Activated B cell treated with CpG ODN at 0.5 μM for 24 hours (primary cell): ENCODE measurements at regions of chr10 and their contacts with region 1.

Region 1: DNA sequence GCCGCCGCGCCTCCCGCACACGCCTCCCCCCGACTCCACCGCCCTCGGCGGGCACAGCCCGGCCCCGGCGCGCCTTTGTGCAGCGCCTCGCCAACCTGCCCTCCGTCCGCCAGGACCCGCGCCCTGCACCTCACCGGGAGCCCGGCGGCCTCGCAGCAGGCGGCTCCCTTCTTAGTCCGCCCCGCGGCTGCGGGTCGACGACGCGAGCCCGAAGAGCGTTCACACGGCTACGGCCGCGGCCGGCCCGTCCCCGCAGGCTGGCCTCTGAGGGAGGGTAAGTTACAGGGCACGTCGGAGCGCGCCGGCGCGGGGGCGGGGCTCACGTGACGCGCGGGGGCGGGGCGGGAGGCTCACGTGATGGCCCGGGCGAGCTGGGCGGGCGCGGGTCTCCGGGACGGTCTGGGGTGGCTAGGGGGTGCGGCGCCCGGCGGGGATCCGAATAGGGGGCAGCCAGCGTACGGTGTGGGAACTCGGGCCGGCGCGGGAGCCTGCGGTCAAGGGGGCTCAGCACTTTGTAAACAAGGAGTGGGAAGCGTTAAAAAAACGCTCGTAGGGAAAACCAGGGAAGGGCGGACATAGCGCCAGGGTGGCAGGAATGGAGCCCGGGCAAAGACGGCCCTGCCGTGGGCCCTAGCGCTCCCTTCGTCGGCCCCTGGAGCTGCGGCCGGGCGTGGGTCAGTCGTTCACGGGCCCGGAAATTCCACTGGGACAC is at the start of gene ARHGAP12:
- DNase-seq: peak; percentile 97
- ATAC-seq: peak; percentile 74
- H3K4me3 Mint-ChIP-seq: peak within 1 kb of the TSS; percentile 91
- H3K27ac Mint-ChIP-seq: peak within 1 kb of the TSS; percentile 88
- H3K4me1 Mint-ChIP-seq: peaks cover 44% of the 10 kb centered on the region
- H3K27me3 Mint-ChIP-seq: no peaks in the 10 kb centered on the region
- CTCF ChIP-seq: no peak
- total RNA-seq, gene ARHGAP12: 23.2 and 27.3 TPM in 2 replicates

Region 2: DNA sequence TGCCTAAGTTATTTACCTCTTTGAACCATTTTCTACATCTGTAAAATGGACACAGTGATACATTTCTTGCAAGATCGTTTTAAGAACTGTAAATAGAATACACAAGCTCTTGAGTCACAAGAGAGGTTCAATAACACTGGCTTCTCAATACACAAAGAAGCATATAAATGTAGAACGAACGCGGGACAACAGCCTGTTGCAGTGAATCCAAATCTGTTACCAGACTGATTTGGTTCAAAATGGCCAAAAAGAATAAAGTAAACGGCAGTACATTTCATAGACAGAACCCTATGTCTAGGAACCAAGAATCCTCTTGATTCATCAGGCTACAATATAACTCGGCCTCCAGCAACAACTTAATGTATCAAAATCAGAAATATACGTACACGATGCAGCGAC is 1580.3 kb before region 1 on chr10:
- CTCF ChIA-PET with region 1: no interaction called
- POLR2A ChIA-PET with region 1: no interaction called
- intact Hi-C with region 1: loop called (anchors 5 kb)
- DNase-seq: no peak
- ATAC-seq: no peak
- H3K4me3 Mint-ChIP-seq: peak overlapping the region; percentile 99
- H3K27ac Mint-ChIP-seq: peak overlapping the region; percentile 95
- H3K4me1 Mint-ChIP-seq: peaks cover 46% of the 10 kb centered on the region
- H3K27me3 Mint-ChIP-seq: no peaks in the 10 kb centered on the region
- CTCF ChIP-seq: no peak

Region 3: GRCh38 chr10:31536302-31536701 is 392.4 kb before region 1 on chr10:
- CTCF ChIA-PET with region 1: no interaction called
- POLR2A ChIA-PET with region 1: no interaction called
- intact Hi-C with region 1: no loop called
- DNase-seq: no peak
- ATAC-seq: no peak
- H3K4me3 Mint-ChIP-seq: no peak overlapping the region
- H3K27ac Mint-ChIP-seq: no peak overlapping the region
- H3K4me1 Mint-ChIP-seq: no peaks in the 10 kb centered on the region
- H3K27me3 Mint-ChIP-seq: no peaks in the 10 kb centered on the region
- CTCF ChIP-seq: no peak

Region 4: GRCh38 chr10:31864834-31865518 is 63.7 kb before region 1 on chr10:
- CTCF ChIA-PET with region 1: interaction called, 5 read pairs
- POLR2A ChIA-PET with region 1: interaction called, 4 read pairs
- intact Hi-C with region 1: loop called (anchors 2 kb)
- DNase-seq: no peak
- ATAC-seq: no peak
- H3K4me3 Mint-ChIP-seq: no peak overlapping the region
- H3K27ac Mint-ChIP-seq: no peak overlapping the region
- H3K4me1 Mint-ChIP-seq: peaks cover 27% of the 10 kb centered on the region
- H3K27me3 Mint-ChIP-seq: no peaks in the 10 kb centered on the region
- CTCF ChIP-seq: no peak

Region 5: DNA sequence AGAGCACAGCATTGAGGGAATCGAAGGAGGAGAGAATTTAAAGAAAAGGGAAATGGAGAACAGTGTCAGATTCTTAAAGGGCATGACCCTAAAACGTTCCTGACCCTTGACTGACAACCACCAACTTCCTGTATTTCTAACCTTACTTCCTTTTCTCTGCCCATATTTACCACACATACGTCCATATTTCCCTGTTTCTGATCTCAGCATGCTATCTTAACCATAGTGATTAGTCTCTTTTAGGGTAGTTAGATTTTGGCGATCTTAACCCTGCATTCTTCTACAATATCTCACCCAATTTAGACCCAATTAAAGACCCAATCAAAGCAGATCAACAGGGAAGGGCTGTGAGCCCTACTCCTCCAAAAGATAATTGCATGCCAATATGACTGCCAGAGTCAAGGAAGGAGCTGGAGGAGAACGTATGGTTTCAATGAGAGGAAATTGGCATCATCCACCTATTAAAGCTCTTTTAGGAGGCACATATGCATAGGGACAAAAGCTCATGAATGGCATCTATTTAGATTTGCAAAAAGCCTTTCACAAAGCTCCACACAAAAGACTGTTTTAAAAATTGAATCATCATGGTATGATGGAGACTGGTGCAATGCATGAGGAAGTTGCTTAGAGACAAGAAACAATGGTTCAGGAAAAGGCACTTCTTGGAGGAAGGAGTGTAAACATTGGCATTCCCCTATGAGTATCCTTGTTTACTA is 48.9 kb after region 1 on chr10:
- CTCF ChIA-PET with region 1: no interaction called
- POLR2A ChIA-PET with region 1: no interaction called
- intact Hi-C with region 1: loop called (anchors 1 kb)
- DNase-seq: no peak
- ATAC-seq: peak; percentile 71
- H3K4me3 Mint-ChIP-seq: peak overlapping the region; percentile 3
- H3K27ac Mint-ChIP-seq: no peak overlapping the region
- H3K4me1 Mint-ChIP-seq: peaks cover 13% of the 10 kb centered on the region
- H3K27me3 Mint-ChIP-seq: no peaks in the 10 kb centered on the region
- CTCF ChIP-seq: no peak

Region 6: GRCh38 chr10:32055813-32056600 is 127.3 kb after region 1 on chr10 and contains the start of gene KIF5B:
- CTCF ChIA-PET with region 1: no interaction called
- POLR2A ChIA-PET with region 1: interaction called, 4 read pairs
- intact Hi-C with region 1: loop called (anchors 1 kb)
- DNase-seq: peak; percentile 90
- ATAC-seq: peak; percentile 86
- H3K4me3 Mint-ChIP-seq: peak within 1 kb of the TSS; percentile 96
- H3K27ac Mint-ChIP-seq: peak within 1 kb of the TSS; percentile 90
- H3K4me1 Mint-ChIP-seq: peaks cover 56% of the 10 kb centered on the region
- H3K27me3 Mint-ChIP-seq: no peaks in the 10 kb centered on the region
- CTCF ChIP-seq: no peak
- total RNA-seq, gene KIF5B: 44.2 and 45.0 TPM in 2 replicates

Region 7: DNA sequence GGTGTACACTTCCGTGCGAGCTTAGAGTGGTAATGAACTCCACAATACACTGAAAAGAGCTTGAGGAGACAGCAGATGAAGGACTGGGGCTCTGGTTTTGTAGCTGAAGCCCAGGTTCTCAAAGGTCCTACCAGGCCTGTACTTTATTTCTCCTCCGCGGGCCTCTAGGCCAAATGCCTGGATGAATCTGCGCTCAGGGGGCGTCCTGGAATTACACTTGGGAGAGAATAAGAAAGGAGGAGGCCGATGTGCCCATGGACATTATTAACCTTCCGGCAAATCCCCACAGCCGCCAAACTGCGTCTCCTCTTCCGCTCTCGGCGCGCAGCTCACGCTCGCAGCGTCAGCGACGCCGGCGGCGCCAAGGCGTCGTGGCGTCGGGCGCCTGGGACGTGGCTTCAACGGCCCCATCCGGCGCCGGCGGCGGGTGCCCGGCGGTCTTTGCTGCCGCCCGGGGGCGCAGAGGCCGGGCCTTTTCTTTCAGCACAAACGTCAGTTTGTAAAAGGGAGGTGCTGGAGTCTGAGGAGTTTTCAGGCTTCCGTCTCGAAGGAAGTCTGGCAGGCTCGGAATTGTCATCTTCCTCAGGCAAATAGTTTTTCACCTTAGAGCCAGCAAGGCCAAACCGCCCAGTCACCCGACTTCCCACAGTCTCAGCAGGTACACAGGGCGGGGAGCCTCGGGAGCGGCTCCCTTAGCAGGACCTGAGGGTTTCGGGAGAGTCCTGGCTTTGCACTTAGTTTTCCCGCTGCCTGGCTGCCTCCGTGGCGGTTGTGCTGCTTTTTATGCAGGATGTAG is 517.2 kb after region 1 on chr10 and contains the start of gene CCDC7:
- CTCF ChIA-PET with region 1: no interaction called
- POLR2A ChIA-PET with region 1: no interaction called
- intact Hi-C with region 1: loop called (anchors 5 kb)
- DNase-seq: peak; percentile 83
- ATAC-seq: peak; percentile 98
- H3K4me3 Mint-ChIP-seq: peak within 1 kb of the TSS; percentile 98
- H3K27ac Mint-ChIP-seq: peak within 1 kb of the TSS; percentile 99
- H3K4me1 Mint-ChIP-seq: peaks cover 15% of the 10 kb centered on the region
- H3K27me3 Mint-ChIP-seq: peaks cover 6% of the 10 kb centered on the region
- CTCF ChIP-seq: no peak
- total RNA-seq, gene CCDC7: 16.8 and 20.0 TPM in 2 replicates